Uterus (tissue), 4 donors: ENCODE measurements at regions of chr10 and their contacts with region 1.

Region 1: GRCh38 chr10:6401562-6402348 is 178.3 kb downstream of the PRKCQ start:
- DNase-seq: peak; percentile 70 to 77
- H3K4me3 ChIP-seq: peak overlapping the region in 1 of 2 donors; percentile 34
- H3K27ac ChIP-seq: peak overlapping the region in 1 of 2 donors; percentile 21
- H3K4me1 ChIP-seq: peaks cover 0 to 2% of the 10 kb centered on the region in 2 donors
- H3K27me3 ChIP-seq: no peaks in the 10 kb centered on the region
- CTCF ChIP-seq: peak; percentile 83 to 93 (median 88)
- POLR2A ChIP-seq: no peak

Region 2: GRCh38 chr10:6045314-6045848 is 356.4 kb before region 1 on chr10:
- intact Hi-C with region 1: no loop called
- DNase-seq: no peak
- H3K4me3 ChIP-seq: no peak overlapping the region
- H3K27ac ChIP-seq: no peak overlapping the region
- H3K4me1 ChIP-seq: no peaks in the 10 kb centered on the region
- H3K27me3 ChIP-seq: no peaks in the 10 kb centered on the region
- CTCF ChIP-seq: no peak
- POLR2A ChIP-seq: no peak

Region 3: DNA sequence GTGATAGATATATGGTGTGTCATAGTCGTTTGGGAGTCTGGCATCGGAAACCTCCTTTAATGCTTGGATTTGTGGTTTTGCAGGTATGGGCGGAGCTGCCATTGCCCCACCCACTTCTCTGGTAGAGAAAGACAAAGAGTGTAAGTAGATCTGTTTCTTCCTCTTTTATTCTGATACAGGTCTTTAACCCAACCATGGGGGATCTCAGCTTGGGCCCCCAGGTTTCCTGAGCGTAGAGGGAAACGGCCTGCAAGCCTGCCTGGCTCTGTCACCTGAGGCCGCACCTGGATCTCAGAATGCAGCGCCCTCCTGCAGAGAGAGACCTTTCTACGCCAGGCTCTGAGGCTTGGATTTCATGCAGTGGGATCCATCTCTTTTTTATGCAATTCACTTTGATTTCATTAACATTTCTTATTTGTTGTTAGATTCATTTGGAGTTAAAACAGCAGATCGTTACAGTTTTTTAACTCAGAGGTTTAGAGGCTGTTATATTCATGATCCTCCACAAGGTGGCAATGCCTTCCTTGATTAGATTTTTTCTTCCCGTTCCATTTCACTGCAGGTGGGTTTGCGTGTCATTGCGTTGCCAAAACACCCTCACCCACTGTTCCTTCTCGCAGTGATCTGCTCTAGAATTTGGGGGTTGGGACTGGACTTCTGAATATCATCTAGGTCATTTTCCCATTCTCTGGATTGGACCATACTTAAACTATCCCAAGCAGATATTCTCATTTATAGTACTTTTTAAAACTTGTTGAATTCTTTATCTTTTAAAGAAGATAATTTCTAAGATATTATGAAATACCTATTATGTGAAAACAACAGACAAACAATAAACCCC is 292.9 kb before region 1 on chr10:
- intact Hi-C with region 1: loop called (anchors 5 kb)
- DNase-seq: no peak
- H3K4me3 ChIP-seq: no peak overlapping the region
- H3K27ac ChIP-seq: no peak overlapping the region
- H3K4me1 ChIP-seq: no peaks in the 10 kb centered on the region
- H3K27me3 ChIP-seq: no peaks in the 10 kb centered on the region
- CTCF ChIP-seq: peak; percentile 69 to 77 (median 74)
- POLR2A ChIP-seq: no peak

Region 4: GRCh38 chr10:6530211-6530840 is 128.6 kb after region 1 on chr10:
- intact Hi-C with region 1: no loop called
- DNase-seq: peak in 1 of 2 donors; percentile 19
- H3K4me3 ChIP-seq: no peak overlapping the region
- H3K27ac ChIP-seq: no peak overlapping the region
- H3K4me1 ChIP-seq: no peaks in the 10 kb centered on the region
- H3K27me3 ChIP-seq: no peaks in the 10 kb centered on the region
- CTCF ChIP-seq: no peak
- POLR2A ChIP-seq: no peak

Region 5: DNA sequence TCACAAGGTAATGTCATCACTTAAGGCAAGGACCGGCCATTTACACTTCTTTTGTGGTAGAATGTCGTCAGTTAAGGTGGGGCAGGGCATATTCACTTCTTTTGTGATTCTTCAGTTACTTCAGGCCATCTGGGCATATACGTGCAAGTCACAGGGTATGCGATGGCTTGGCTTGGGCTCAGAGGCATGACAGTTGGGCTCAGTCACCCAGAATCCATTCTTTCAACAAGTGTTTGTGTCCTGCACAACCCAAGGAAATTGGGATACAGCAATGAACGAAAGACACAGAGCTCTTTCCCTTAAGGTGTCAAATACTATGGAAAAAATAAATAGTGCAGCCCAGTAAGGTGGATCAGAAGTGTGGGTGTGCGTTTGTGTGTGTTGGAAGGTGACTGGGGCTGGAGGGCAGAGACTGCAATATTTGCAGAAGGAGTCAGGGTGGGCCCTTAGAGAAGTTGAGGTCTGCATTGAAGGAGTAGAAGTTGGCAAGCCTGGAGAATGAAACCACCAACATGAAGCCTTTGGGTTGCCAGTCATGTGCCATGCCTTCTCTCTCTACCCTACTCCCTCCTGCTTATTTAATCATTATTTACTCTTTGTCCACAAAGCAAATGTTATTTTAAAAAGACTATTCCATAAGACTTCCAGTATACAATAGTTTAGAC is 401.1 kb after region 1 on chr10:
- intact Hi-C with region 1: no loop called
- DNase-seq: no peak
- H3K4me3 ChIP-seq: no peak overlapping the region
- H3K27ac ChIP-seq: no peak overlapping the region
- H3K4me1 ChIP-seq: no peaks in the 10 kb centered on the region
- H3K27me3 ChIP-seq: no peaks in the 10 kb centered on the region
- CTCF ChIP-seq: no peak
- POLR2A ChIP-seq: no peak